HAP-1 (cell line): ENCODE measurements at regions of chr11 and their contacts with region 1.

Region 1: DNA sequence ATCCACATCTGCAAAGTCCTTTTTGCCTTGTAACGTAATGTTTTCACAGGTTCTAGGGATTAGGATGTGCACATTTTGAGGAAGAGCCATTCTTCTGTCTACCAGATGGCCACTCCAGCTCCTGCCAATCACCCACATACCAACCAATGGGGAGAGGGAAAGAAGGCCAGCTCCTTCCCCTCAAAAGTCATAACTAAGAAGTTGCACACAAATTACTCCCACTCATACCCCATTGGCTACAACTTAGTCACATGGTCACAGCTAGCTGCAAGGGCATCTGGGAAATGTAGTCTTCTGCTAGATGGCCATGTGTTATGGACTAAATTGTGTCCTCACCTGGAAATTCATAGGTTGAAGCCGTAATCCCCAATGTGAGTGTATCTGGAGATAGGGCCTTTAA is 15.4 kb upstream of the MYOD1 start:
- DNase-seq: peak in 1 of 2 experiments; percentile 4
- H3K4me3 ChIP-seq: no peak overlapping the region
- H3K4me1 ChIP-seq: no peaks in the 10 kb centered on the region
- H3K27me3 ChIP-seq: 0 out of 2 replicates have a peak, but pooled peaks cover 2% of the 10 kb centered on the region

Region 2: GRCh38 chr11:17354601-17354991 is 349.4 kb before region 1 on chr11:
- in situ Hi-C with region 1: no loop called
- DNase-seq: peak; percentile 77 to 87
- H3K4me3 ChIP-seq: no peak overlapping the region
- H3K4me1 ChIP-seq: peaks cover 10% of the 10 kb centered on the region
- H3K27me3 ChIP-seq: no peaks in the 10 kb centered on the region

Region 3: DNA sequence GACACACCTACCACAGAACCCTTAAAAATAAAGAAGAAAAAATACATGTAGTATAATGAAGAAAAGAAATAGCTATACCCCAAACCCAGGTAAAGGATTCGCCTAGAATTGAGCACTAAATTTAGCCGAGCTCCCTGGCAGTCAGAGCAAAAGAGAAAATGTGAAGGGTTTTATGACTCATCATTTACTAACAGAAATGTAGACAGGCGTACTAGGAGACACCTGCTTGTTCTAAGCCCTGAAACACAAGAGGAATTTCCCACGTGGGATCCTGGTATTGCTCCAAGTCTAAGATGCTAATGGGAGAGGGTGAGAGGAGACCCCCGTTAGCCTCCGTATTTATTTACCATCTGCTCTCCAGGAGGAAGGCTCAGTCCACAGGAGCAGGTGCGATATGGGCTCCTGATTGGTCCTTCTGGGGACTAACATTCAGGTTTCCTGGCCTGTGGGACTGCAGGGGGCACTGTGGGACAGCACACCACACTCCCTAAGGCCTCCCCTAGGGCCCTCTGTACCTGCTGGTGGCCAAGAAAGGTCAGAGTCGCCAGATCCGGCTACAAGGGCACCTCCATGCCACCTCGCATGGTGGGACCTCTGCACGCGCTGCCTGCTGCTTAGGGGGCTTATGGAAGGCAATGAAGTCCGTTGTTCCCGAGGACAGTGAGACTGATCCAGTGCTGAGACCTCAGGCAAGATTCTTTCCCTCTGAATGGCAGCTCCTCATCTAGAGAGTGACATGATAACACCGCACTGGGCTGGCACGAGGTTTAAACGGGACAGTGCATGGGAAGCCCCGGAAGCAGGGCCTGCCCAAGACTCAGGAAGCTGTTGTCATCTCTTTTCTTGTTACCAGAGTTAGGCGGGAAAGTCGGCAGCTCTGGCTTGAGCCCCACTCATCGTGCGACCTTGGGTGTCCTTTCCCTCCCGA is 56.4 kb after region 1 on chr11:
- in situ Hi-C with region 1: loop called (anchors 10 kb)
- DNase-seq: peak; percentile 20 to 71
- H3K4me3 ChIP-seq: no peak overlapping the region
- H3K4me1 ChIP-seq: no peaks in the 10 kb centered on the region
- H3K27me3 ChIP-seq: no peaks in the 10 kb centered on the region

Region 4: DNA sequence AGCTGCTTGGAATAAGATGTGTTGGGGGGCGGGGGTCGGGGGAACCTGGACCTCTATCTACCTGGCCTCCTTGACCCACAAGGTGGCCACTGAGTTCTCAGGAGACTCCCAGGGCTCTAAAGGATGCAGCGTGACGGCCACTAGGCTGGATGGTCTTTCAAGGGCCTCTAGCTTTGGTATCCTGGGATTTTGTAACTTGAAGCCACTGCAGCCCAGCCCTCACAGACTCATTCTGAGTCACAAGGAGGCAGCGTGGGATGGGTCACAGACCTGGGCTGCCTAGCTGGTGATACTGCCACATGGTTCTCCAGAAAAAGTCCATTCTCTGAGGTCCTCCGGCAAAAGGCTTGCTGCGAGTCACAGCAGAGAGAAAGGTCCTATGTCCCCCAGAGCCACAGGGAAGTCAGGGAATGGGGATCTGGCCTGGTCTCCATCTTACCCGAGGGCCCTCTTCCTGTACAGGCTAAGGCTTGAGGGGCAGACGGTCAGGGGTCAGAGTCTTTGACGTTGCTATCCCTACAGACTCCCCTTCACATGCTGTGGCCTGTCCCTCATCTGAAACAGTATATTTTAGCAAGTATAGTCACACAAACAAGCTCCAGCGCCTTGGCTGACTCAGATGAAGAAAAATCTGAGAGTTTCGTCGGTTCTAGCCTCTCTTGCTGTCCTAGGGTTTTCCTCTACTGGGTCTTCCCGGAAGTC is 83.0 kb after region 1 on chr11:
- in situ Hi-C with region 1: no loop called
- DNase-seq: no peak
- H3K4me3 ChIP-seq: no peak overlapping the region
- H3K4me1 ChIP-seq: 0 out of 2 replicates have a peak, but pooled peaks cover 3% of the 10 kb centered on the region
- H3K27me3 ChIP-seq: no peaks in the 10 kb centered on the region

Region 5: DNA sequence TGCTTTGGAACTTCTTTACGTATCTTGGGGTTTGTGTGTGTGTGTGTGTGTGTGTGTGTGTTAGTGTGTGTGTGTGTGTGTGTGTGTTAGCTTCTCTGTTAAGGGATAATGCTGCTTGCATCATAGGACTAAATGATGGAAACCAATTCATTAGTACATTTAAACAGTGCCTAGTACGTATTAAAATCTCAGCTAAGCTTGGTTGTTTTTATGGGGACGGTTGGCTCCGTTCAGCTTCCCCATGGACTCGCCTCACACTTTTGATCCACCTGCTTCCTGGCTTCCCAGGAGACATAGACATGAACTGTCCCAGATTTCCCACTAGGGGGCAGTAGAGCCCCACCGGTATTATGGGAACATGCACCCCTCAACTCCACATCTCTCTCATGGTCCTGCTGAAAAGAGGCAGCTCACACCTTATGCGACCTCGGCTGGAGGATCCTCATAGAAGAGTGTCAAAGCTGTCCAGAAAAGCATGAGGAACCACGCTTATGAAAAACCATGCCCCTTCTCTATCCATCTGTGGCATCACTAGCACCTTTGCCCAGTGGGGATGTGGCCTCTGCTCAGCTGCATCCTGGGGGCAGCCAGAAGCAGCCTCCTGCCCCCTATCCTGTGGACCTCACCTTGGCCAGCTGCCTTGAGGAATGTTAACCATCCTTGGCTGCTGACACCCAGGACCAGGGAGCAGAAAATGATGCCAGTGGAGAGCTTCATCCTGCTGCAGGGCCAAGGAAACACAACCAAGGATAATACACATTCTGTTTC is 411.6 kb after region 1 on chr11:
- in situ Hi-C with region 1: no loop called
- DNase-seq: peak; percentile 67 to 78
- H3K4me3 ChIP-seq: no peak overlapping the region
- H3K4me1 ChIP-seq: no peaks in the 10 kb centered on the region
- H3K27me3 ChIP-seq: peaks cover 28% of the 10 kb centered on the region